ENCODE measurements at regions of chr7 and their contacts with region 1.

Region 1: GRCh38 chr7:44240983-44241510 is 40.3 kb downstream of the YKT6 start:
- DNase-seq: peak; percentile 75
- ATAC-seq: peak; percentile 98
- H3K4me3 ChIP-seq: no peak overlapping the region
- H3K27ac ChIP-seq: no peak overlapping the region
- H3K4me1 ChIP-seq: no peaks in the 10 kb centered on the region
- H3K27me3 ChIP-seq: peaks cover 16% of the 10 kb centered on the region
- CTCF ChIP-seq: peak; percentile 86
- POLR2A ChIP-seq: no peak
- RAD21 ChIP-seq: peak; percentile 87

Region 2: GRCh38 chr7:44218418-44219201 is 22.4 kb before region 1 on chr7:
- CTCF ChIA-PET with region 1: no interaction called
- POLR2A ChIA-PET with region 1: no interaction called
- dilution Hi-C with region 1: no loop called
- in situ Hi-C with region 1: no loop called
- intact Hi-C with region 1: no loop called
- DNase-seq: no peak
- ATAC-seq: peak; percentile 40
- H3K4me3 ChIP-seq: no peak overlapping the region
- H3K27ac ChIP-seq: no peak overlapping the region
- H3K4me1 ChIP-seq: no peaks in the 10 kb centered on the region
- H3K27me3 ChIP-seq: peaks cover 11% of the 10 kb centered on the region
- CTCF ChIP-seq: peak; percentile 17; the same call in 1 of the 2 replicates
- POLR2A ChIP-seq: no peak
- RAD21 ChIP-seq: no peak

Region 3: GRCh38 chr7:44307301-44307900 is 66.4 kb after region 1 on chr7:
- CTCF ChIA-PET with region 1: interaction called, 4 read pairs
- POLR2A ChIA-PET with region 1: no interaction called
- dilution Hi-C with region 1: no loop called
- in situ Hi-C with region 1: no loop called
- intact Hi-C with region 1: loop called (anchors 1 kb)
- DNase-seq: peak; percentile 19
- ATAC-seq: peak; percentile 82
- H3K4me3 ChIP-seq: no peak overlapping the region
- H3K27ac ChIP-seq: no peak overlapping the region
- H3K4me1 ChIP-seq: 0 out of 2 replicates have a peak, but pooled peaks cover 1% of the 10 kb centered on the region
- H3K27me3 ChIP-seq: peaks cover 16% of the 10 kb centered on the region
- CTCF ChIP-seq: peak; percentile 56
- POLR2A ChIP-seq: no peak
- RAD21 ChIP-seq: peak; percentile 74

Region 4: GRCh38 chr7:44477063-44477830 is 236.2 kb after region 1 on chr7:
- CTCF ChIA-PET with region 1: interaction called, 4 read pairs
- POLR2A ChIA-PET with region 1: no interaction called
- dilution Hi-C with region 1: no loop called
- in situ Hi-C with region 1: loop called (anchors 5 kb)
- intact Hi-C with region 1: loop called (anchors 1 kb)
- DNase-seq: peak; percentile 83
- ATAC-seq: peak; percentile 98
- H3K4me3 ChIP-seq: no peak overlapping the region
- H3K27ac ChIP-seq: no peak overlapping the region
- H3K4me1 ChIP-seq: peaks cover 3% of the 10 kb centered on the region; the same call in 1 of the 2 replicates
- H3K27me3 ChIP-seq: no peaks in the 10 kb centered on the region
- CTCF ChIP-seq: peak; percentile 98
- POLR2A ChIP-seq: 0 out of 2 replicates have a peak, but pooled peaks have one; percentile 44
- RAD21 ChIP-seq: peak; percentile 98

Region 5: DNA sequence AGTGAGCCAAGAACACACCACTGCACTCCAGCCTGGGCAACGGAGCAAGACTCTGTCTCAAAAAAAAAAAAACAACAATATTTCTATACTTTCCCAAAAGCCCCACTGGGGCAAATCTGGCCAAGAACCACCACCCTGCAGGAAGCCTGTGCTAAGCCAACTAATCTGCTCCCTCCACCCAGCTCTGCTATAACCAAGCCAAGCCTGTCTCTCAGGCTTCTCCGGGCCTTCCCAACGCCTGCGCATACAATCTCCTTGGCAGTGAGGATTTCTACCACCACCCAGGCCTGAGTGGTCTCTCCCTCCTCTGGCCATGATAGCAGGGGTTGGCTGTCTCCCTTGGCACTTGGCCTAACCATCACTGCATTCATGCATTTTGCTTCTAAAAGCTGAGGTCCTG is 318.4 kb after region 1 on chr7:
- CTCF ChIA-PET with region 1: no interaction called
- POLR2A ChIA-PET with region 1: no interaction called
- dilution Hi-C with region 1: no loop called
- in situ Hi-C with region 1: loop called (anchors 10 kb)
- intact Hi-C with region 1: loop called (anchors 2 kb)
- DNase-seq: no peak
- ATAC-seq: no peak
- H3K4me3 ChIP-seq: no peak overlapping the region
- H3K27ac ChIP-seq: no peak overlapping the region
- H3K4me1 ChIP-seq: peaks cover 2% of the 10 kb centered on the region; the same call in 1 of the 2 replicates
- H3K27me3 ChIP-seq: peaks cover 4% of the 10 kb centered on the region
- CTCF ChIP-seq: no peak
- POLR2A ChIP-seq: no peak
- RAD21 ChIP-seq: no peak

Region 6: GRCh38 chr7:44565097-44565794 is 324.2 kb after region 1 on chr7:
- CTCF ChIA-PET with region 1: interaction called, 3 read pairs
- POLR2A ChIA-PET with region 1: no interaction called
- dilution Hi-C with region 1: no loop called
- in situ Hi-C with region 1: loop called (anchors 10 kb)
- intact Hi-C with region 1: loop called (anchors 1 kb)
- DNase-seq: peak; percentile 49
- ATAC-seq: peak; percentile 92
- H3K4me3 ChIP-seq: no peak overlapping the region
- H3K27ac ChIP-seq: no peak overlapping the region
- H3K4me1 ChIP-seq: peaks cover 2% of the 10 kb centered on the region; the same call in 1 of the 2 replicates
- H3K27me3 ChIP-seq: no peaks in the 10 kb centered on the region
- CTCF ChIP-seq: peak; percentile 90
- POLR2A ChIP-seq: peak; percentile 39; the same call in 1 of the 2 replicates
- RAD21 ChIP-seq: peak; percentile 87